ENCODE measurements at regions of chr9 and their contacts with region 1.

Region 1: DNA sequence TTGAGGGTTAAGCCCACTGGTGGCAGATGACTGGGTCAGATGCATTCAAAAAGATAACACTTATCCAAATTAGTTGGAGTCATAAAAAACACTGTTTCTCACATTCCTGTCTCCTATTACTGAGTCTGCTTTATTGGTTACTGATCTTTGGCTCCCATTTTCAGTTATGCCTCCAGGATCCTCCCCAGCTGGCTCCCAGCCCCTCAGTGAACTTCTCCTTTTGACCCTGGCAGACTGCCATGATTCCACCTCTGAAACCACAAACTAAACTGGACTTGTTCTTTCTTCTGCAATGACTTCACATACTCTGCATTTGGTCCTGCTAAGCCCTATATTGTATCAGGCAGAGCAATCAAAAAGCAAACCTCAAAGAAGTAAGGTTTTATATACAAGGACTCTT is 860.8 kb upstream of the DMAC1 start:
- DNase-seq: peak; percentile 45
- H3K4me3 ChIP-seq: no peak overlapping the region
- H3K27ac ChIP-seq: no peak overlapping the region
- H3K4me1 ChIP-seq: no peaks in the 10 kb centered on the region
- H3K27me3 ChIP-seq: no peaks in the 10 kb centered on the region
- CTCF ChIP-seq: no peak
- POLR2A ChIP-seq: no peak

Region 2: DNA sequence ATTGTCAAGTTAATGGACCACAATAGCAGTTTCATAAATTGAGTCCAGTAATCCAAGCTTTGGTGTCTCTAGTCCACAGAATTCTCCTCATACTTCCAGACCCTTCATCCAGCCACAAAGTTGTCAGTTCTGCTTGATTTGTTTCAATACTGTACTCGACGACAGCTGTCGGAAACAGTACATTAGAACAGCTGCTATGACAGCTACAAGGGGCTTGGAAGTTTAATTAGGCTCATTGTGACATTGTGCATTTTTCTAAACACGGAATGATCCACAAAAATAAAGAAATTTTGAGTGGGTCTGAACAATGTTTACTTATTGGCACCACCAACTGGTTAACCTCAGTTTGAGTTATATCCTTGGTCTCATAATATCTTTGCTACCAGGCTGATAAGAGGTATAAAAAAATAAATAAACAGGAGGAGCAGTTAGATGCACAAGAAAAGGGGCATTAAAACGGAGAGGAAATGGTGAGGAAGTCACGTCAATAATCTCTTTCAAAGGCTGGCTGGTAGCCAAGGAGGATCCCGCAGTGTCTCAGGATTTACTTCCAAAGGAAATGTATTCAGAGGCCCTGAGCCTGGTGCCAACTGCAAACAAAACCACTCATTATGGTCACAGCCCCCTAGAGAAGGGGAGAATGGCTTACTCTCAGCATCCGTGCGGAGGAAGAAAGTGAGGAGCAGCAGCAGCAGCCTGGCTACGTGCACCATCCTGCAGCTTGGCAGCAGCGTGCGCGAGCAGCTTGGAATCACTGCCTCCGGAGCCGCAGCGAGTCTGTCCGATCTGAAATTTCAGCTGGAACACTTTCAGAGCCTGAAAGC is 73.0 kb after region 1 on chr9:
- intact Hi-C with region 1: no loop called
- DNase-seq: peak; percentile 33
- H3K4me3 ChIP-seq: peak overlapping the region in 1 of 2 donors; percentile 11
- H3K27ac ChIP-seq: no peak overlapping the region
- H3K4me1 ChIP-seq: no peaks in the 10 kb centered on the region
- H3K27me3 ChIP-seq: no peaks in the 10 kb centered on the region
- CTCF ChIP-seq: no peak
- POLR2A ChIP-seq: no peak

Region 3: DNA sequence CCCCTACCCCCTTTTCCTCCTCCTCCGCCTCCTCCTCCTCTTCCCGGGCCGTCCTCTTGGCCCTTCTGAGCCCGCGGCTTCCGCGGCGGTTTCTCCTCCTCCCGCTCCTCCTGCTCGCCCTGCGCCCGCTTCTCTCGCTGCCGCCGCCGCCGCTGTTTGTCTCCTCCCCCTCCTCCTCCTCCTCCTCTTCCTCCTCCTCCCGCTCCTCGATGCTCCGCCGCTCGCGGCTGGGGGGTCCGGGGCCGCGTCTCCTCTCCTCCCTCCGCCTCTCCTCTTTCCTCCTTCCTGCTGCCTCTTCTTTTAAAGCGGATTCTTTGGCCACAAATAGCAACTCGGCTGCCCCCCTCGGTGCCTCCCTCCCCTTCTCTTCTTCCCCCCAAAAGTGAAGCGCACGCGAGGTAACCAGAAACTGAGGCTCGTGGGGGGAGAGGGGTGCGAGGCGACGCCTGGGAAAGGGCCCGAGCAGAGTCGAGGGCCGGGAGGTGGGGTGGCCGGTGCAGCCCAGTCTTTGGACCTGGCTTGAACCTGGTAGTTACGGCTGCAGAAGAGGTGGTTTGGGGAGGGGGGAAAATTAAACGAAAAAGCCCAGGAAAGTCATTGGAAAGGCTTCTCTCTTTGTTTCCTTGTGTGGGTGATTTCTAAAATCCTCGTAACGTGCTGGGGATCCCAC is 197.7 kb after region 1 on chr9:
- intact Hi-C with region 1: loop called (anchors 10 kb)
- DNase-seq: peak; percentile 36
- H3K4me3 ChIP-seq: peak overlapping the region; percentile 50 to 60
- H3K27ac ChIP-seq: peak overlapping the region in 1 of 2 donors; percentile 15
- H3K4me1 ChIP-seq: no peaks in the 10 kb centered on the region
- H3K27me3 ChIP-seq: no peaks in the 10 kb centered on the region
- CTCF ChIP-seq: no peak
- POLR2A ChIP-seq: no peak